BJ (cell line): ENCODE measurements at regions of chr10 and their contacts with region 1.

Region 1: DNA sequence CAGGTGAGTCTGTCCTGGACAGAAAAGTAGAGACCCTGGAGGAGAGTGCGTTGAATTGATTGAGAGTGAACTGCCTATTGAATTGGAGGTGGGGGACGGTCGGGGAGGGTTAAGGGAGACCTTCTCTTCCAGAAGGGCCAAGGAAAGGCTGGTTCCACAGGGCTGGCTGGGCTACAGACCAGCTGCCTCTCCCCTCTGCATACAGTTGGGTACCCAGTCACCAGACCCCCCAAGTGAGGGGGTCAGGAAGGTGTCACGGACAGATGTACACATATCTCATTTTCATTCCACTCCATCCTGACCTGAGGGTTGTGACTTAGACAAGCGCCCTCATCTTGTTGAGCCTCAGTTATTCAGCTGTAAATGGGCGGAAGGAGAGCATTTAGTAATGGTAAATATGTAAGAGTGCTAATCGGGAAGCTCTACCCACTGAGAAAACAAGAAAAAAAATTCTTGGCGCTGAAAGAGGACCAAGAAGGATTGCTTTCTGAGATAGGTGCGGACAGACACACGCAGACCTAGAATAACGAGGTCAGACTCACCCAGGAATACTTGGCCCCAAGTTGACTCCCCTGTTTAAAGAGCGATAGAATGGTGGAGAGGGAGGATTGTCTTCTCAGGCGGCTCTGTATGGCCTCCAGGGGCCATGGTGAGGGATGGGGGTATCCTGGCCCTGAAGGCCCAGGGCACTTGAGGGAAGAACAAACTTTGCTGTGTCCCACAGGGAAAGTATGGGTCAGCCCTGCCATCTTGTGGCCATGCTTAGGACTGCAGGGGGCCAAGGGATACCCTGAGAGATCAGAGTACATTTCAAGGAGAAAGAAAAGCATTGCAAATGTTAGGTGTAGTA is 7.2 kb upstream of the MBL2 start:
- DNase-seq: no peak
- H3K4me3 ChIP-seq: no peak overlapping the region
- H3K27me3 ChIP-seq: peaks cover 1% of the 10 kb centered on the region; the same call in 1 of the 2 replicates
- CTCF ChIP-seq: peak; percentile 98

Region 2: GRCh38 chr10:52652431-52653262 is 127.1 kb before region 1 on chr10:
- CTCF ChIA-PET with region 1: interaction called, 12 read pairs
- POLR2A ChIA-PET with region 1: no interaction called
- DNase-seq: no peak
- H3K4me3 ChIP-seq: no peak overlapping the region
- H3K27me3 ChIP-seq: no peaks in the 10 kb centered on the region
- CTCF ChIP-seq: no peak

Region 3: DNA sequence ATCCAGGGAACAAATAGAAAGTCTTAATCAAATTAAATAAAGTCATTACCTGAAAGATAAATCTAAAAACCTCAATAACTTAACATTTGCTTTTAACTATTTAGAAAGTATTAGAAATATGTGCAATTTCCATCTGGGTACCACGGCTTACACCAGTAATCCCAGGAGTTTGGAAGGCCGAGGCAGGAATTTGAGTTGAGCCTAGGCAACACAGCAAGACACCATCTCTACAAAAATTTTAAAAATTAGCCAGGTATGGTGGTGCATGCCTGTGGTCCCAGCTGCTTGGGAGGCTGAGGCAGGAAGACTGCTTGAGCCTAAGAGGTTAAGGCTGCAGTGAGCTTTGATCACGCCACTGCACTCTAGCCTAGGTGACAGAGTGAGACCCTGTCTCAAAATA is 92.0 kb before region 1 on chr10:
- CTCF ChIA-PET with region 1: no interaction called
- POLR2A ChIA-PET with region 1: no interaction called
- DNase-seq: no peak
- H3K4me3 ChIP-seq: no peak overlapping the region
- H3K27me3 ChIP-seq: no peaks in the 10 kb centered on the region
- CTCF ChIP-seq: no peak

Region 4: DNA sequence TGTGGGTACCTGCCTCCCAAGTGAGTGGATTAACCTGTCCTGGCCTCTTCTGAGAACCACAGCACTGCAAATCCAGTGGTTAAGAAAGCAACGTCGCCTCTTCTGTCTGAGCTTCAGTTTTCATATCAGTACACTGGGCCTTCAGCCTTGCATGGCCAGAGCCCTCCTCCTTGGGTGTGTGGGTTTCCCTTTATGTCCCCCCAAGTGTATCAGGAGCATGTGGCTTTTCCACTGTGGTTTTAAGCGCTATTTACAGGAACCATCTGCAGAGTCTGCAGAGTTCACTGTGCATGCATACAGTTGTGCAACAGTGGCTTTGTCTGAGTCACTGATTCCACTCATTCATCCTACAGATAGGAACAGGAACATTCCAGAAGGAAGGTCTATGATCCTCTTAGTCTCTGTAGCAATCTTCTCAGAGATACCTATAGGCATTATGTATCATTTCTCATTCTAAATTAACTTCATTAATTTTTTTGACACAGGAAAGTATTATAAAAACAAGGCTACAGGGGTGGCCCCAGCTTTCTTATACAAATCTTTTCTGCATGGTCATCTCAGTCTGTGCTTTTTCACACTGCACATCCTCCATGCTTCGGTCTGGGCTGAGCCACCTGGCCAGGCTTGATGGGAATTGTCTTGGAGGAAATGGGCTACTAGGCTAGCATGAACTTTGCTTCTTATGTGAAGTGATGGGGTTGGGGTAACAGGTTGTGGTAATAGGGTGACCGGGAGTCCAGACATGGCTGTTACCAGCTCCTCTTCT is 24.3 kb before region 1 on chr10:
- CTCF ChIA-PET with region 1: interaction called, 49 read pairs
- POLR2A ChIA-PET with region 1: no interaction called
- DNase-seq: peak; percentile 31
- H3K4me3 ChIP-seq: no peak overlapping the region
- H3K27me3 ChIP-seq: no peaks in the 10 kb centered on the region; the same call in none of the 2 replicates
- CTCF ChIP-seq: no peak

Region 5: DNA sequence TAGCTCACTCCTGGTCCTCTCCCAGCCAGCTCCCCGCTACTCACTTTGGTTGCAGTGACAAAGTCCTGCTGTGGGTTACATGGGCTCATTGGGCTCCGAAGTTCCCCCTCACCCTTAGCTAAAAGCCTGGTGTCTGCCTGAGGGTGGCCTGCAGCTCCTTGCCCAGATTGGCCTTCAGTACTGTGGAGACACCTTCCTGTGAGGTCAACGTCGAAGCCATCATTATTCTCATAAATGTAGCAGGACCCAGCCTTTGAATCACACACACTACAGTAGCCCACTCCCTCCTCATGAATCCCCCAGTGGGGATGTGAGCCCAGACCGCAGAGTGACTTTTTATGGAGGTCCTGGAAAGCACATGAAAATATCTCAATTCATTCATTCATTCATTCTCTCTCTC is 17.7 kb before region 1 on chr10:
- CTCF ChIA-PET with region 1: interaction called, 49 read pairs
- POLR2A ChIA-PET with region 1: no interaction called
- DNase-seq: no peak
- H3K4me3 ChIP-seq: no peak overlapping the region
- H3K27me3 ChIP-seq: no peaks in the 10 kb centered on the region
- CTCF ChIP-seq: no peak

Region 6: DNA sequence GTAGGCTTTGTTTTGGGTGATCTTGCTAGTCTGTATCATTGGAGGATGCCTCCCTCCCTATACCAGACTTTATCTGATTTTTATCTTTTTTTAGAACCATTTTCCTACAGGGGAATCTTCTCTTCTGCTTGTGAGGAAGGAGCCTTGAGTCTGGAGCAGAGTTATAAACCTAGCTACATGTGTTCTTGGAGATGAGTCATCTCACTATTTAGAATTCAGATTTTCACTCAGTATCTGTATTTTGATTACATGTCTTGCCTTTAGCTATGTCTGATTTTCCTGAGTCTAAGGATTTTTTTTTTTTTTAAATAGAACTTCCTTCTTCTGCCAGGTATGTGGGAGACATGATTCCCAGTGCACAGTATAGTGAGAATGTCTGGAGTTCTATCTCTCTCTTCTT is 204.4 kb after region 1 on chr10:
- CTCF ChIA-PET with region 1: no interaction called
- POLR2A ChIA-PET with region 1: no interaction called
- DNase-seq: no peak
- H3K4me3 ChIP-seq: no peak overlapping the region
- H3K27me3 ChIP-seq: no peaks in the 10 kb centered on the region
- CTCF ChIP-seq: no peak